Activated T-helper 1 cell treated with anti-CD3 and anti-CD28 coated beads, Interleukin-12 subunit alpha, Interleukin-12 subunit beta, Interleukin-2, Interleukin-4 antibody, amounts not matched to agents 30 ng/mL and 10 ng/mL and 1 ng/mL, durations not matched to agents 14 hours and 24 hours and 36 hours (primary cell): ENCODE measurements at regions of chr7 and their contacts with region 1.

Region 1: GRCh38 chr7:70788276-70788675 is 343.7 kb upstream of the GALNT17 start:
- DNase-seq: no peak
- H3K4me3 Mint-ChIP-seq: no peak overlapping the region
- H3K27ac Mint-ChIP-seq: no peak overlapping the region
- H3K4me1 Mint-ChIP-seq: peaks cover 14% of the 10 kb centered on the region
- H3K27me3 Mint-ChIP-seq: no peaks in the 10 kb centered on the region

Region 2: GRCh38 chr7:70647801-70648498 is 140.3 kb before region 1 on chr7:
- intact Hi-C with region 1: loop called (anchors 1 kb)
- DNase-seq: peak; percentile 76
- H3K4me3 Mint-ChIP-seq: peak overlapping the region; percentile 0
- H3K27ac Mint-ChIP-seq: peak overlapping the region; percentile 31
- H3K4me1 Mint-ChIP-seq: peaks cover 15% of the 10 kb centered on the region
- H3K27me3 Mint-ChIP-seq: peaks cover 14% of the 10 kb centered on the region